Naive thymus-derived CD4-positive, alpha-beta T cell (primary cell): ENCODE measurements at regions of chr15 and their contacts with region 1.

Region 1: GRCh38 chr15:99565299-99566156 is at the start of gene MEF2A:
- DNase-seq: peak; percentile 86 to 94 (median 91)
- ATAC-seq: peak; percentile 86
- H3K4me3 ChIP-seq: peak within 1 kb of the TSS; percentile 100
- H3K4me3 Mint-ChIP-seq: peak within 1 kb of the TSS; percentile 96 to 100 (median 98)
- H3K27ac ChIP-seq: peak within 1 kb of the TSS; percentile 81
- H3K27ac Mint-ChIP-seq: peak within 1 kb of the TSS; percentile 93 to 99 (median 97)
- H3K4me1 ChIP-seq: peaks cover 8 to 24% of the 10 kb centered on the region in 2 donors
- H3K4me1 Mint-ChIP-seq: peaks cover 32 to 62% (median 55%) of the 10 kb centered on the region in 7 donors
- H3K27me3 ChIP-seq: no peaks in the 10 kb centered on the region
- H3K27me3 Mint-ChIP-seq: peaks cover 0 to 5% (median 0%) of the 10 kb centered on the region in 5 donors
- total RNA-seq, gene MEF2A: 24.2 to 42.8 (median 38.5) TPM

Region 2: GRCh38 chr15:99104788-99105513 is 460.6 kb before region 1 on chr15 and contains the start of gene SYNM:
- CTCF ChIA-PET with region 1: no interaction called
- POLR2A ChIA-PET with region 1: no interaction called
- intact Hi-C with region 1: loop called in 1 of 2 experiments (anchors 5 kb)
- DNase-seq: peak in 5 of 9 donors; percentile 7 to 72 (median 19)
- ATAC-seq: peak; percentile 60
- H3K4me3 ChIP-seq: peak within 1 kb of the TSS; percentile 27
- H3K4me3 Mint-ChIP-seq: peak within 1 kb of the TSS in 9 of 10 donors; percentile 23 to 79 (median 59)
- H3K27ac ChIP-seq: no peak within 1 kb of the TSS
- H3K27ac Mint-ChIP-seq: peak within 1 kb of the TSS in 2 of 9 donors; percentile 29 to 82
- H3K4me1 ChIP-seq: peaks cover 0 to 12% of the 10 kb centered on the region in 2 donors
- H3K4me1 Mint-ChIP-seq: peaks cover 0 to 26% (median 9%) of the 10 kb centered on the region in 7 donors
- H3K27me3 ChIP-seq: peaks cover 0 to 5% of the 10 kb centered on the region in 2 donors
- H3K27me3 Mint-ChIP-seq: peaks cover 36 to 59% (median 39%) of the 10 kb centered on the region in 5 donors
- total RNA-seq, gene SYNM: 0.53 to 6.0 (median 2.2) TPM

Region 3: GRCh38 chr15:99409097-99409473 is 156.4 kb before region 1 on chr15:
- CTCF ChIA-PET with region 1: no interaction called
- POLR2A ChIA-PET with region 1: interaction called, 12 read pairs
- intact Hi-C with region 1: loop called in 1 of 2 experiments (anchors 1 kb)
- DNase-seq: peak in 6 of 9 donors; percentile 24 to 57 (median 42)
- ATAC-seq: peak; percentile 71
- H3K4me3 ChIP-seq: no peak overlapping the region
- H3K4me3 Mint-ChIP-seq: peak overlapping the region in 3 of 10 donors; percentile 27 to 66 (median 28)
- H3K27ac ChIP-seq: no peak overlapping the region
- H3K27ac Mint-ChIP-seq: peak overlapping the region in 7 of 9 donors; percentile 18 to 91 (median 32)
- H3K4me1 ChIP-seq: peaks cover 0 to 17% of the 10 kb centered on the region in 2 donors
- H3K4me1 Mint-ChIP-seq: peaks cover 0 to 28% (median 22%) of the 10 kb centered on the region in 7 donors
- H3K27me3 ChIP-seq: no peaks in the 10 kb centered on the region
- H3K27me3 Mint-ChIP-seq: peaks cover 0 to 3% (median 0%) of the 10 kb centered on the region in 5 donors

Region 4: GRCh38 chr15:99578809-99579208 is 13.3 kb after region 1 on chr15:
- CTCF ChIA-PET with region 1: no interaction called
- POLR2A ChIA-PET with region 1: interaction called, 4 read pairs
- intact Hi-C with region 1: loop called in 1 of 2 experiments (anchors 1 kb)
- DNase-seq: no peak
- ATAC-seq: no peak
- H3K4me3 ChIP-seq: no peak overlapping the region
- H3K4me3 Mint-ChIP-seq: peak overlapping the region in 3 of 10 donors; percentile 15 to 22 (median 19)
- H3K27ac ChIP-seq: no peak overlapping the region
- H3K27ac Mint-ChIP-seq: peak overlapping the region in 1 of 9 donors; percentile 55
- H3K4me1 ChIP-seq: peaks cover 0 to 5% of the 10 kb centered on the region in 2 donors
- H3K4me1 Mint-ChIP-seq: peaks cover 18 to 83% (median 75%) of the 10 kb centered on the region in 7 donors
- H3K27me3 ChIP-seq: no peaks in the 10 kb centered on the region
- H3K27me3 Mint-ChIP-seq: no peaks in the 10 kb centered on the region

Region 5: DNA sequence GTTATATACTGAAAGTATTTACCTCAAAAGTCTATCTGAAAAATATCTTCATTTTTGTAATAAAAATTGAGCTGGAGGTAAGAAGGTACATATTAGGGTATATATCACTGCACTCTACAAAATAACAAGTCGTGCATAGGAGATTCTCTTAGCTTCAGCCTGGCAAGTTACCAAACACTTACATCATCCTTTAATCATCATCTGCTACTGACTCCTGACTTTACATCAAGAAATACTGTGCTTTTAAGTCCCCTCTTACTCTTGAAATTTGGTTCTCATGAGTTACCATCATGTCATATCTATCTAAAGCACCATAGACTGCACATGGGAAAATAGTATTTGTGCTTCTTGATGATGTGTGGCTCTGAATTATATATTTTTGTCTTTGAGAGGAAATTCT is 116.9 kb after region 1 on chr15:
- CTCF ChIA-PET with region 1: interaction called, 3 read pairs
- POLR2A ChIA-PET with region 1: interaction called, 4 read pairs
- intact Hi-C with region 1: loop called (anchors 5 kb)
- DNase-seq: peak in 3 of 9 donors; percentile 8 to 23 (median 12)
- ATAC-seq: no peak
- H3K4me3 ChIP-seq: no peak overlapping the region
- H3K4me3 Mint-ChIP-seq: peak overlapping the region in 5 of 10 donors; percentile 2 to 62 (median 21)
- H3K27ac ChIP-seq: peak overlapping the region; percentile 57
- H3K27ac Mint-ChIP-seq: peak overlapping the region in 8 of 9 donors; percentile 64 to 94 (median 79)
- H3K4me1 ChIP-seq: peaks cover 0 to 21% of the 10 kb centered on the region in 2 donors
- H3K4me1 Mint-ChIP-seq: peaks cover 19 to 58% (median 47%) of the 10 kb centered on the region in 7 donors
- H3K27me3 ChIP-seq: no peaks in the 10 kb centered on the region
- H3K27me3 Mint-ChIP-seq: no peaks in the 10 kb centered on the region

Region 6: GRCh38 chr15:100341662-100342560 is 776.4 kb after region 1 on chr15 and contains the start of gene ADAMTS17:
- CTCF ChIA-PET with region 1: no interaction called
- POLR2A ChIA-PET with region 1: no interaction called
- intact Hi-C with region 1: loop called in 1 of 2 experiments (anchors 5 kb)
- DNase-seq: peak; percentile 80 to 96 (median 94)
- ATAC-seq: peak; percentile 98
- H3K4me3 ChIP-seq: peak within 1 kb of the TSS; percentile 69
- H3K4me3 Mint-ChIP-seq: peak within 1 kb of the TSS; percentile 59 to 88 (median 76)
- H3K27ac ChIP-seq: peak within 1 kb of the TSS; percentile 76
- H3K27ac Mint-ChIP-seq: peak within 1 kb of the TSS in 6 of 9 donors; percentile 6 to 76 (median 29)
- H3K4me1 ChIP-seq: peaks cover 4 to 6% of the 10 kb centered on the region in 2 donors
- H3K4me1 Mint-ChIP-seq: peaks cover 7 to 36% (median 28%) of the 10 kb centered on the region in 7 donors
- H3K27me3 ChIP-seq: no peaks in the 10 kb centered on the region
- H3K27me3 Mint-ChIP-seq: peaks cover 0 to 57% (median 4%) of the 10 kb centered on the region in 5 donors
- total RNA-seq, gene ADAMTS17: 2.0 to 13.5 (median 3.2) TPM